T-cell (primary cell): ENCODE measurements at regions of chr20 and their contacts with region 1.

Region 1: GRCh38 chr20:54190217-54190616 is 16.4 kb upstream of the CYP24A1 start:
- DNase-seq: no peak
- ATAC-seq: no peak
- H3K4me3 ChIP-seq: no peak overlapping the region
- H3K4me3 Mint-ChIP-seq: no peak overlapping the region
- H3K27ac ChIP-seq: no peak overlapping the region
- H3K27ac Mint-ChIP-seq: no peak overlapping the region
- H3K4me1 ChIP-seq: no peaks in the 10 kb centered on the region
- H3K4me1 Mint-ChIP-seq: no peaks in the 10 kb centered on the region
- H3K27me3 ChIP-seq: peaks cover 0 to 10% of the 10 kb centered on the region in 2 experiments
- H3K27me3 Mint-ChIP-seq: peaks cover 12 to 23% of the 10 kb centered on the region in 2 donors

Region 2: DNA sequence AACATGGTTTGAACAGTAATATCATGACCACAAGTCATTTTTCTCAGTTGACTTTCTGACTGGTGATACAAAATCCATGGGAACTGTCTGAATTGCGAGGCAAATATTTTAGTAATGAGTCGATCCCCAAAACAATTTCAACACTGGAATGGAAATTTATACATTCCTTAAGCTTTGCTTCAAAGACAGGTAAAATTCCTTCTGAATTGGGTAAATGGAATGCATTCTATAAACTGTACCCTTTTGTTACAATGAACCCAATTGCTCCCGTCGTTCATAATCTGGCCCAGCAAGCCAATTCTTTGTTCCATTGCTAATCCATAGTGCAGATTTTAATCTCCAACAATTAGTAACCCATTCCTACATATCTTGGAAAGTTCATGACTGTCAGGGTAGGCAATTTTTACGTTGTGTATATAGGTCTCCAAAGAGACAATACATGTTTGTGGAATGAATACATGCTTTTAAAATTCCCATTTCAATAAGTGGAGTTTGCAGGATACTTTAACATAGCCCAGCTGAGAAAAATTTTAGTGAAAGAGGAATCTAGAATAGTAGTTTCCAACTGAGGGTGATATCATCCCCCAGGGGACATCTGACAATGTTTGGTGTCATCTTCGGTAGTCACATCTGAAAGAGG is 49.2 kb before region 1 on chr20:
- CTCF ChIA-PET with region 1: no interaction called
- POLR2A ChIA-PET with region 1: no interaction called
- DNase-seq: no peak
- ATAC-seq: no peak
- H3K4me3 ChIP-seq: no peak overlapping the region
- H3K4me3 Mint-ChIP-seq: no peak overlapping the region
- H3K27ac ChIP-seq: no peak overlapping the region
- H3K27ac Mint-ChIP-seq: no peak overlapping the region
- H3K4me1 ChIP-seq: no peaks in the 10 kb centered on the region
- H3K4me1 Mint-ChIP-seq: no peaks in the 10 kb centered on the region
- H3K27me3 ChIP-seq: peaks cover 0 to 4% of the 10 kb centered on the region in 2 experiments
- H3K27me3 Mint-ChIP-seq: peaks cover 8 to 22% of the 10 kb centered on the region in 2 donors

Region 3: GRCh38 chr20:55642120-55642519 is 1451.9 kb after region 1 on chr20:
- CTCF ChIA-PET with region 1: no interaction called
- POLR2A ChIA-PET with region 1: interaction called in 1 of 2 experiments, 11 read pairs
- DNase-seq: no peak
- ATAC-seq: no peak
- H3K4me3 ChIP-seq: no peak overlapping the region
- H3K4me3 Mint-ChIP-seq: no peak overlapping the region
- H3K27ac ChIP-seq: no peak overlapping the region
- H3K27ac Mint-ChIP-seq: no peak overlapping the region
- H3K4me1 ChIP-seq: no peaks in the 10 kb centered on the region
- H3K4me1 Mint-ChIP-seq: no peaks in the 10 kb centered on the region
- H3K27me3 ChIP-seq: no peaks in the 10 kb centered on the region
- H3K27me3 Mint-ChIP-seq: no peaks in the 10 kb centered on the region